Stomach (tissue), 19 donors: ENCODE measurements at regions of chr10 and their contacts with region 1.

Region 1: DNA sequence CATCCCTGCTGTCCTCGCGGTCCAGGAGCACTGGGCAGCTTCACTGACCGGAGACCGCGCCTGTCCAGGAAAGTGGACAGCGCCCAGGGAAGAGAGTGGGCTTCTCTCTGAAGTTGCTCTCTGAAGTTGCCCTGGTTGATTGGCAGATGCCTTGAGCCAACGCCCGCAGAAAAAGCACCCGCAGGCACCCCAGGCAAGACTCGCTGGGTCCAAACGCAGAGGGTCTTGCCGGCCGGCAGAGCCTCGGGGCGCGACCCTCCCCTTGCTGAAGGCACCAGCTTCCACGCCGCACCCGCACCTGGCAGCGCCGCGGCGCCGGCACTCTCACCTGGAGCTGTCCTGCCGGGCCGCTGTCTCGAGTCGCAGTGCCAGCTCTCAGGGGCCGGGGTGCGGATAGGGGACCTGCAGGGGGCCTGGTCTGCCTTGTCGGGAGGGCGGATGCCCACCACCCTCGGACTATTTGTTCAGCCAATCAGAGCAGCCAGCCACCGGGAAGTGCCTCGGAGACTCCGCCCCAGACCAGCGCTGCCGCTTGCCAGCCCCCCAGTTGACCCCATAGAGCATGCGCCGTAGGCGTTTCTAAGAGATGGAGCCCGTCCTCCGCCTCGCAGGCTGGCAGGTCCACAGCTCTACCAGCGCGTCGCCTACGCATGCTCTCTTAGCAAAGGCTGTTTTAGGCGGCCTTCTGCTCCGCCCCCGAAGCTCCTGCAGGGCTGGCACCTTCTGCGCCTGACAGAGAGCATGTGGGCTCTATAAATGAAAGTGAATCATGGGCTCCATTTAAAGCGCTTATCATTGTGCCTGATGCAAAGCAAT is at the start of gene LIPA:
- DNase-seq: peak; percentile 94 to 98
- H3K4me3 ChIP-seq: peak within 1 kb of the TSS; percentile 73 to 91 (median 84)
- H3K27ac ChIP-seq: peak within 1 kb of the TSS; percentile 47 to 88 (median 83)
- H3K4me1 ChIP-seq: peaks cover 7 to 20% (median 14%) of the 10 kb centered on the region in 4 donors
- H3K27me3 ChIP-seq: no peaks in the 10 kb centered on the region
- CTCF ChIP-seq: no peak
- EP300 ChIP-seq: no peak
- POLR2A ChIP-seq: no peak
- total RNA-seq, gene LIPA: 1.8 to 65.9 (median 13.4) TPM

Region 2: DNA sequence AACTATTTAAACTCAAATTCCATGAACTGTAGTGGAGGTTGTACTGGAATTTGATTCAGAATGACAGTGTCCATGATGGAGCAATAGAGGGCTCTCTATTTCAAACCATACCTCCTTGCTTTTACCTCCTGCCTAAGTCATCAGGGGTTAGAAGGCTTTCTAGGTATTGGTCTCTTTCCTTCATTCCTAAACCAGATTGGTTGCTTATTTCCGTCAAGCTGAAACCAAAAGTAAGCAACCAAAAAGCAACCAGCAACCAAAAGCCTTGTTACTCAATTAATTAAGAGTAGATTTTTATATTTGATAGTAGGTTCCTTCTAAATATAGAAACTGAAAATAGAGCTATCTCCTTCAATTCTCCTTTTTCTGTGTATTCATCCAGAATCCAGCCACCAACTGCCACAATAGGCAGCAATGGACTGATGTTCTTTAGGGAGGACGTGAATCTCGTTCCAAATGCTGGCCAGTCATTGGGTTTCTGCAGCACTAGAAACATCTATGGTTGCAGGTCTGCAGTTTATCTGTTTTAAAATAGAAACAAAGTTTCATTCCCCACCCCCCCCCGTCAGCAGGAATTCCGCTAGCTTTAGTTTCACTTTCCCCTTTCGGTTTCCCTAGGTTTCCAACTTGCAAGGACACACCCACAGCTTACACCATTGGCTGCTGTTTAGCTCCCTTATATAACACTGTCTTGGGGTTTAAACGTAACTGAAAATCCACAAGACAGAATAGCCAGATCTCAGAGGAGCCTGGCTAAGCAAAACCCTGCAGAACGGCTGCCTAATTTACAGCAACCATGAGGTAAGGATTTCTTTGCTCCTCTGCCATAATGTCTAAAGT is 140.5 kb after region 1 on chr10 and contains the start of gene IFIT1:
- intact Hi-C with region 1: loop called (anchors 10 kb)
- DNase-seq: peak; percentile 44 to 95
- H3K4me3 ChIP-seq: peak within 1 kb of the TSS; percentile 48 to 62 (median 60)
- H3K27ac ChIP-seq: peak within 1 kb of the TSS; percentile 78 to 92 (median 89)
- H3K4me1 ChIP-seq: peaks cover 15 to 49% (median 25%) of the 10 kb centered on the region in 4 donors
- H3K27me3 ChIP-seq: no peaks in the 10 kb centered on the region
- CTCF ChIP-seq: no peak
- EP300 ChIP-seq: no peak
- POLR2A ChIP-seq: no peak
- total RNA-seq, gene IFIT1: 0.29 to 12.1 (median 2.3) TPM

Region 3: DNA sequence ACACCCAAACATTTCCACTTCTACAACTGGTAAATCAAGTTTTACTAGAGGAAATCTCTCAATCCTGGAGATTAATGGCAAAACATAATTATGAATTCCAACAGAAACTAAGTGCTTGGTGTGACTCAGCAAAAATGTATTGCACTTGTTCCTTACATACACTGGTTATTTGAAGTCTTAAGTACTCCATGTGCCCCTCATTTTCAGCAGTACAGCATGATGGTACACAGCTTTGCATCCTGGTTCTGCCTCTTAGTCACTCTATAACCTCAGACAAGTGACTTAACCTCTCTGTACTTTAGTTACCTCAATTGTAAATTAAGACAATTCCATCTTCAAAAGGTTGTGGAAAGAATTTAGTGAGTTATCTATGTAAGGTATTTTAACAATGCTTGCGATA is 270.8 kb after region 1 on chr10:
- intact Hi-C with region 1: no loop called
- DNase-seq: no peak
- H3K4me3 ChIP-seq: no peak overlapping the region
- H3K27ac ChIP-seq: no peak overlapping the region
- H3K4me1 ChIP-seq: peaks cover 8 to 21% (median 15%) of the 10 kb centered on the region in 4 donors
- H3K27me3 ChIP-seq: peaks cover 0 to 5% (median 0%) of the 10 kb centered on the region in 3 donors
- CTCF ChIP-seq: no peak
- EP300 ChIP-seq: no peak
- POLR2A ChIP-seq: no peak